Activated B cell treated with CpG ODN at 0.5 μM for 24 hours (primary cell): ENCODE measurements at regions of chr6 and their contacts with region 1.

Region 1: GRCh38 chr6:106339334-106340029 is 13.9 kb upstream of the ATG5 start:
- DNase-seq: no peak
- ATAC-seq: peak; percentile 79
- H3K4me3 Mint-ChIP-seq: peak overlapping the region; percentile 59
- H3K27ac Mint-ChIP-seq: no peak overlapping the region
- H3K4me1 Mint-ChIP-seq: peaks cover 7% of the 10 kb centered on the region
- H3K27me3 Mint-ChIP-seq: peaks cover 17% of the 10 kb centered on the region
- CTCF ChIP-seq: no peak

Region 2: GRCh38 chr6:106556368-106556960 is 217.0 kb after region 1 on chr6:
- CTCF ChIA-PET with region 1: interaction called, 4 read pairs
- POLR2A ChIA-PET with region 1: no interaction called
- intact Hi-C with region 1: loop called (anchors 2 kb)
- DNase-seq: no peak
- ATAC-seq: peak; percentile 31
- H3K4me3 Mint-ChIP-seq: no peak overlapping the region
- H3K27ac Mint-ChIP-seq: peak overlapping the region; percentile 13
- H3K4me1 Mint-ChIP-seq: peaks cover 22% of the 10 kb centered on the region
- H3K27me3 Mint-ChIP-seq: no peaks in the 10 kb centered on the region
- CTCF ChIP-seq: no peak

Region 3: DNA sequence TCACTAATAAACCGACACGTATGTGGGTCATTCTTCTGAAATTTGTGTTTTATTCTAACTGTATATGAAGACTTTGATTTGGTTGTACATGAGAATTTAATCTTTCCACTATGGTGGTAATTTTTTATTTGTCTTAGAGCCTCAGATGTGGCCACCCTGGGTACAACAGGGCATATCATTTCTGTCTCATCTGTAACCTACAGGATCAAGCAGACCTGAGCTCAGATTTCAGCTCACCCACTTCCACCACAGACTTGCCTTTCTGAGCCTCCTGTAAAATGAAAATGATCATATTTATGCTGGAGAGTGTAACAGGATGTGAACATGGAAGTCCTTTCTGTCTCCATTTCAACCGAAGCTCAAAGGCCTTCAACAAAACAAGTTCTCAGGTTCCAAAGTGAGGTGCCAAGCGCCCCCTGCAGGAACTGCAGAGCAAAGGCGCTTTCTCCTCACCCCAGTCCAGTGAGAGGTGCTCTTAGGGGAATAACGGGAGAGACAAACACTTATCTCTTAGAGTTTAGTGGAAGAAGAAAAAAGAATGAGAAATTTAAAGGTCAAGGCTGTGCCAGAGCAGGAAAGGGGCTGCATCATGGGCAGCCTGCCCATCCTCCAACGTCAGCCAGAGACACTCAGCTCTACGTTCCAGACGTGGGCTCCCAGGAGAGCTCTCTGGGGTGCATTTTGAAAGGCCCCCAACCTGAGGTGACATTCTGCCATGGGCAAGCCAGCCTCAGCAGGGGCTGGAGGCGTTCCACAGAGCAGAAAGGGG is 658.1 kb after region 1 on chr6:
- CTCF ChIA-PET with region 1: interaction called, 7 read pairs
- POLR2A ChIA-PET with region 1: no interaction called
- intact Hi-C with region 1: loop called (anchors 1 kb)
- DNase-seq: peak; percentile 34
- ATAC-seq: peak; percentile 73
- H3K4me3 Mint-ChIP-seq: no peak overlapping the region
- H3K27ac Mint-ChIP-seq: no peak overlapping the region
- H3K4me1 Mint-ChIP-seq: peaks cover 2% of the 10 kb centered on the region
- H3K27me3 Mint-ChIP-seq: no peaks in the 10 kb centered on the region
- CTCF ChIP-seq: peak; percentile 31